Activated B cell treated with CpG ODN at 0.5 μM for 24 hours (primary cell): ENCODE measurements at regions of chr22 and their contacts with region 1.

Region 1: GRCh38 chr22:41832553-41833368 is at the start of gene SREBF2:
- DNase-seq: peak; percentile 96
- ATAC-seq: peak; percentile 85
- H3K4me3 Mint-ChIP-seq: peak within 1 kb of the TSS; percentile 98
- H3K27ac Mint-ChIP-seq: peak within 1 kb of the TSS; percentile 99
- H3K4me1 Mint-ChIP-seq: peaks cover 62% of the 10 kb centered on the region
- H3K27me3 Mint-ChIP-seq: no peaks in the 10 kb centered on the region
- CTCF ChIP-seq: no peak
- total RNA-seq, gene SREBF2: 253 and 307 TPM in 2 replicates

Region 2: GRCh38 chr22:41697126-41697775 is 135.5 kb before region 1 on chr22:
- CTCF ChIA-PET with region 1: interaction called, 6 read pairs
- POLR2A ChIA-PET with region 1: interaction called, 6 read pairs
- intact Hi-C with region 1: loop called (anchors 2 kb)
- DNase-seq: peak; percentile 91
- ATAC-seq: peak; percentile 83
- H3K4me3 Mint-ChIP-seq: peak overlapping the region; percentile 63
- H3K27ac Mint-ChIP-seq: peak overlapping the region; percentile 72
- H3K4me1 Mint-ChIP-seq: peaks cover 12% of the 10 kb centered on the region
- H3K27me3 Mint-ChIP-seq: no peaks in the 10 kb centered on the region
- CTCF ChIP-seq: peak; percentile 51

Region 3: GRCh38 chr22:41800348-41801146 is 32.2 kb before region 1 on chr22 and contains the start of gene CCDC134:
- CTCF ChIA-PET with region 1: interaction called, 3 read pairs
- POLR2A ChIA-PET with region 1: interaction called, 52 read pairs
- intact Hi-C with region 1: no loop called
- DNase-seq: peak; percentile 88
- ATAC-seq: peak; percentile 98
- H3K4me3 Mint-ChIP-seq: peak within 1 kb of the TSS; percentile 98
- H3K27ac Mint-ChIP-seq: peak within 1 kb of the TSS; percentile 97
- H3K4me1 Mint-ChIP-seq: peaks cover 34% of the 10 kb centered on the region
- H3K27me3 Mint-ChIP-seq: no peaks in the 10 kb centered on the region
- CTCF ChIP-seq: no peak
- total RNA-seq, gene CCDC134: 9.2 and 13.2 TPM in 2 replicates

Region 4: GRCh38 chr22:41857155-41857859 is 24.5 kb after region 1 on chr22:
- CTCF ChIA-PET with region 1: interaction called, 7 read pairs
- POLR2A ChIA-PET with region 1: interaction called, 166 read pairs
- intact Hi-C with region 1: loop called (anchors 1 kb)
- DNase-seq: no peak
- ATAC-seq: peak; percentile 18
- H3K4me3 Mint-ChIP-seq: peak overlapping the region; percentile 45
- H3K27ac Mint-ChIP-seq: peak overlapping the region; percentile 77
- H3K4me1 Mint-ChIP-seq: peaks cover 72% of the 10 kb centered on the region
- H3K27me3 Mint-ChIP-seq: no peaks in the 10 kb centered on the region
- CTCF ChIP-seq: no peak

Region 5: DNA sequence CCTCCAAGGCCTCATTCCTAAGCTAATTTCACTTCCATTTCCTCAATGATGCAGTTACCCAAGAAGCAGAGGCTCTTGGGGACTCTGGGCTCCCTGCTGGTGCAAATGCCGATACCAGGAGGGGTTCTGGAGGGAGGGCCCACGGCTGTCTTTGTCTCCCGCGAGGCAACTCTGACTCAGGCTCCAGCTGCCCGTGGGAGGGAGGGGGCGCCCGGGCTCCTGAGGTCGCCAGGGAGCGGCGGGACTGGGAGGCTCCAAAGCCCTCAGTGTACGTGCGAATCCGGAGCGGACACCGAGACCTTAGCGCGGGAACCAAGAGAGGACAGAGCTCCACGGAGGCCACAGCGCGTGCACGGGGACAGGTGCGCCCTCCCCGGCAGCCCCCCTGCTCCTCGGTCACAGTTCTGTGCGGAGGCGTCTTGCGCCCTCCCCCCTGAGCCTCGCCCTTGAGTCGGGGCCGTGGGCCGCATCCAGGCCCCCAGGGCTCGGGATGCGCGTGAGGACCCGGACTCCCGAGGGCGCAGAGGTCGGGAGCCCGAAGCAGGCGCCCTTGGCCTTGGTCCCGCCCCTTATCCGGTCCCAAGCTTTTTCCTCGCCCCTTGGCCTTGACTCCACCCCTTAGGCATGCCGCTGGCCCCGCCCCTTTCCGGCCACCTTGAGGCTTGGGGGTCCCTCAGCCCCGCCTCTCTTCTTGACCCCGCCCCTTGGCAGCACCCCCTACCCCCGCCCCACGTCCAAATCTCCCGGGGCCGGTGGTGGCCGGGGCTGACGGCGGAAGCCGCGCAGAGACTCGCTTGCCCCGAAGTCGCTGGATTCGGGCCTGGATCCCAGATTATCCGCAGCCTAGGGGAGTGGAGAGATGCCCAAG is 86.8 kb after region 1 on chr22:
- CTCF ChIA-PET with region 1: no interaction called
- POLR2A ChIA-PET with region 1: interaction called, 141 read pairs
- intact Hi-C with region 1: no loop called
- DNase-seq: peak; percentile 82
- ATAC-seq: peak; percentile 53
- H3K4me3 Mint-ChIP-seq: peak overlapping the region; percentile 82
- H3K27ac Mint-ChIP-seq: peak overlapping the region; percentile 94
- H3K4me1 Mint-ChIP-seq: peaks cover 88% of the 10 kb centered on the region
- H3K27me3 Mint-ChIP-seq: no peaks in the 10 kb centered on the region
- CTCF ChIP-seq: no peak

Region 6: DNA sequence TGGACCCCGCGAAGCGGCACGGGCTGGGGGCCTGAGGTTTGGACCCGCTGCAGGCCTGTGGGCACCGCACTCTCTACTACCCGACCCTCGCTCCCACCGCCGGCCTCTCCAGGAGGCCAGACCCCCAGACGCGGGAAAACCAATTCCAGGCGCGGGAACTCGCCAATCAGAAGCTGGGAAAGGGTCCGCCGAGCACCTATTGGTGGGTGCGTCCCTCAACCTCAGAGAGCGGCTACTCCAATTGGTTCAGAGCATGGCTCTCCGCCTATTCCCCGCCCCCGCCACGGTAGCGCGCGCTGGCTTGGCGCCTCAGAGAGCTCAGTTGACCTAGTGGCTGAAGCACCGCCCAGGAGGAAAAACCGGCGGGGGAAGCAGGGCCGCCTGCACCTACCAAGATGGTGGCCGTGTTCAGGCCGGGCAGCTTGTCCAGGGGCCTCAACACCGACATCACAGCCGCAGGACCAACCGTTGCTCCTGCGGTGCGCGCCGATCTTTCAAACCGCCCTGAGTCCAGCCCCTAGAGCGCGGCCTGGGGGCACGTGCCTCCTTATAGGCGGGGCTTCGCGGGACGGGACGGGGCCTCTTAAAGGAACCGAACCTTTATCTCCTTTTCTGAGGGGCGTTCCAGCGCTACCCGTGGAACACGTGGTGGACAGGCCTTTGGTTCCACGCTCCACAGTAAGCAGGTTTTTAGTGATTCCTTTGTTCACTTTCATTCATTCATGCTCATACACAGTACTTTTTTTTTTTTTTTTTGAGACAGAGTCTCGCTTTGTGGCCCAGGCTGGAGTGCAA is 114.1 kb after region 1 on chr22 and contains the start of gene CENPM:
- CTCF ChIA-PET with region 1: interaction called, 32 read pairs
- POLR2A ChIA-PET with region 1: interaction called, 221 read pairs
- intact Hi-C with region 1: no loop called
- DNase-seq: peak; percentile 84
- ATAC-seq: peak; percentile 91
- H3K4me3 Mint-ChIP-seq: peak within 1 kb of the TSS; percentile 91
- H3K27ac Mint-ChIP-seq: peak within 1 kb of the TSS; percentile 80
- H3K4me1 Mint-ChIP-seq: peaks cover 52% of the 10 kb centered on the region
- H3K27me3 Mint-ChIP-seq: no peaks in the 10 kb centered on the region
- CTCF ChIP-seq: no peak
- total RNA-seq, gene CENPM: 9.6 and 13.3 TPM in 2 replicates